ENCODE measurements at regions of chr16 and their contacts with region 1.

Region 1: DNA sequence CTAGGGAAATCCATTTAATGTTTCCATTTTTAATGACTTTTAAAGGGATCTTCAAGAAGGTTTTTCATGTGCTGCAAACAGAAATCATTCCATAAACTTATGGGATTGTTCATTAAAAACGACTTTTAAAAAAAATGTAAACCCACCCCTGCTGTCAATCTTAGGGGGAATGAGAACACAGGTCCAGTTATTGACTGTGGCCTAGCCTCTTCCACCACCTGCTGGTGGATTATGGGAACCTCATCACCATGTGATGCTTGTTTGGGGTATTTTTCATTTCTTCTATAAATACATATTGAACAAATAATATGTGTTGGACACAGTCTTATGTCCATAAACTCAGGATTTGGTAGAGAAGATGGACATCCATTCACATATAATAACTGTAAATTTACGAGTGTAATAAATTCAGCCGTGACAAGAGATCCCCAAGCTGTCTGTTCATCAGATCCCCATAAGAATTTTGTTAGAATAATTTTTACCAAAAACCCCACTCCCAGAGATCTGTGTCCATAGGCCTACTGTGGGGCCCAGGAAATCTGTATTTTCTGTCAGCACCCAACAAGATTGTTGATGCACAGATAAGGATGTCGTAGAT is 42.0 kb upstream of the TMC5 start:
- DNase-seq: peak; percentile 35
- ATAC-seq: peak; percentile 56 to 67

Region 2: GRCh38 chr16:18983565-18984424 is 391.9 kb before region 1 on chr16 and contains the start of gene TMC7:
- intact Hi-C with region 1: loop called in 1 of 2 experiments (anchors 10 kb)
- DNase-seq: peak; percentile 84
- ATAC-seq: peak; percentile 95 to 97
- total RNA-seq, gene TMC7: 0.85 to 1.2 TPM

Region 3: DNA sequence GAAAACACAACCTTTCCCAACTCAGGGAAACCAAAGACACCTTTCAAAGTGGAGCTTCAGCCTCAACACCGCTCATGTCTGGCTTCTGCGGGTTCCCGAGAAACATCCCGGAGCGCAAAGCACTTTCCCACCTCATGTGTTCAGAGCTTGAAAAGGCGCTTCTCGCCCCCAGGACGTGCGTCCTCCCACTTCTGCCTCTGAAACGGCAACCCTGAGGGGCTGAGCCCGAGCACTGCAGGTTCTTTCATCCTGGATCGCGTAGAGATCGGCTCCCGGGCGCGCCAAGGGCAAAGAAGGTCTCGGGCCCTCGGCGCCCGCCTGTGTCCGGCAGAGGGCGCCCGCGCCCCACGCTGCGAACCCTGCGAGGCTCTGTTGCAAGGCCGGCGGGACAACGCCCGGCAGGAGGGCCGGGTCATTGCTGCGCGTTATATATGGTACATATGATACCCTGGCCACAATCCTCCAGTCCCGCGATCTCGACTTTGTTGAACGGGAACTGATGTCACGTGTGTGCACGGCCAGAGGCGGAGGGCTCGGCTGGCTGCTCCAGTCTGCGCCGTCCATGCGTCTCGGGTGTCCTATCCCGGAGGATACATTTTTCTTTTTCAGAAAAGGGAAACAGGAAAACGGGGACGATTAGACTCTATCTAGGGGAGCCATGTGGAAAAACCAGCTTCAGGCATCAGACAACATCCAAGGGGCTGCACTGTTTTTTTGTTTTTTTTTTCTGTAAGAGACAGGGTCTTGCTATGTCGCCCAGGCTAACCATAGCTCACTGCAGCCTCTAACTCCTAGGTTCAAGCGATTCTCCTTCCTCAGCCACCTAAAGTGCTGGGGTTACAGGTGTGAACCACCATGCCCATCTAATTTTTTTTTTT is 289.1 kb before region 1 on chr16:
- intact Hi-C with region 1: loop called (anchors 1 to 2 kb)
- DNase-seq: peak; percentile 86
- ATAC-seq: peak; percentile 96 to 98

Region 4: DNA sequence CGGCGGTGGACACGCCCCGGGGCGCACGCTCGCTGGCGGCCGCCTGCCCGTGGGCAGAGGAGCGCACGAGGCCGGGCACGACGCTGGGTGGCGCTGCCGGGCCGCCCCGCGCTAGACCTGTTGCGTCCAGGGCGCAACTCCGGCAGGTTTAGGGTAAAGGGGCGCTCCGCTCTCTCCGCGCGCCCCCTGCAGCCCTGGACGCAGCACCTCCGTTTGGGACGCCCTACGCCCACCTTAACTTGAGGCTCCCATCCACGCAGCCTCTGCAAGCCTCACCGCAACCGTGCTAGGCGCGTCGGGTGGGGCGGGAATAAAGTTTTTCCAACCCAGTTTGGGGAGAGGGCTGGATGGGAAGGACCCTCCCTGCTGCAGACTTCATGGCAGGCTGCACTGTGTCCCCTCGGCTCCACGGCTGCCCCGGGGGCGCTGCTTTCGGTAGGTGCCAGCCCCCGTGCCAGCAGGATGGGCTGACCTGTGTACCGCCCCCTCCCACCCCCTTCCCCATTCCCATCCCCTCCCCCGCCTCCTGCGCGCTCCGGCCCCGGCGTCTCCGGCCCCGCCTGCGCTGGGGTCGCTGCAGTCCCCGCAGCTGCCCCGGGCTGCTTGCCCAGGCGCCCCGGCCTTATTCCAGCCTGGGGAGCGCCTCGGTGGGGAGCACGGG is 207.8 kb before region 1 on chr16 and contains the start of gene SYT17:
- intact Hi-C with region 1: loop called in 1 of 2 experiments (anchors 5 kb)
- DNase-seq: peak; percentile 78
- ATAC-seq: peak; percentile 95 to 96
- total RNA-seq, gene SYT17: 0.52 to 1.4 TPM